Ascending aorta (tissue), 2 donors: ENCODE measurements at regions of chr4 and their contacts with region 1.

Region 1: GRCh38 chr4:102826890-102827673 is at the start of gene UBE2D3:
- DNase-seq: peak; percentile 67 to 96
- H3K4me3 ChIP-seq: peak within 1 kb of the TSS; percentile 83 to 88
- H3K27ac ChIP-seq: peak within 1 kb of the TSS; percentile 100
- H3K4me1 ChIP-seq: peaks cover 0 to 19% of the 10 kb centered on the region in 2 donors
- H3K27me3 ChIP-seq: no peaks in the 10 kb centered on the region
- CTCF ChIP-seq: no peak
- total RNA-seq, gene UBE2D3: 379 TPM

Region 2: DNA sequence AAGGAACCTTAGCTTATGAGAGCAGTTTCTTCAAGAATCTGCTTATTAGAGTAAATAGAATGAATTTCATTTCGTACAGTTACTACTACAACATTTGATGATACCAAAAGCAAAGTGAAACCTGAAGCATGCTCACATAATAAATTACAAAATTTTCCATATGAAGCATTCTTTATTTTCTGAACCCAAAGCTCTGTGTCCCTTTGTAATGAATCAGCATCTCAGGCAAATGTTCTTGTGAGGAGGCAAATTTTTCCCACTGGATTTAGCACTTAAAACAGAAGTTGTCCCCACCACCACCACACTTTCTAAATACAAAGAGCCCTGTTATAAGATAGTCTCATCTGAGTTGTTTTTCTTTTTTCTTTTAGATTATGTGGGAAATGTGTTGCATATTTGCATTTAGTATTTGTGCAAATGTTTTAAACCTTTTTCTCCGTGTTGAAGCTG is 396.6 kb before region 1 on chr4:
- intact Hi-C with region 1: loop called (anchors 2 kb)
- DNase-seq: no peak
- H3K4me3 ChIP-seq: peak overlapping the region; percentile 66 to 87
- H3K27ac ChIP-seq: peak overlapping the region; percentile 49 to 70
- H3K4me1 ChIP-seq: no peaks in the 10 kb centered on the region
- H3K27me3 ChIP-seq: no peaks in the 10 kb centered on the region
- CTCF ChIP-seq: no peak

Region 3: DNA sequence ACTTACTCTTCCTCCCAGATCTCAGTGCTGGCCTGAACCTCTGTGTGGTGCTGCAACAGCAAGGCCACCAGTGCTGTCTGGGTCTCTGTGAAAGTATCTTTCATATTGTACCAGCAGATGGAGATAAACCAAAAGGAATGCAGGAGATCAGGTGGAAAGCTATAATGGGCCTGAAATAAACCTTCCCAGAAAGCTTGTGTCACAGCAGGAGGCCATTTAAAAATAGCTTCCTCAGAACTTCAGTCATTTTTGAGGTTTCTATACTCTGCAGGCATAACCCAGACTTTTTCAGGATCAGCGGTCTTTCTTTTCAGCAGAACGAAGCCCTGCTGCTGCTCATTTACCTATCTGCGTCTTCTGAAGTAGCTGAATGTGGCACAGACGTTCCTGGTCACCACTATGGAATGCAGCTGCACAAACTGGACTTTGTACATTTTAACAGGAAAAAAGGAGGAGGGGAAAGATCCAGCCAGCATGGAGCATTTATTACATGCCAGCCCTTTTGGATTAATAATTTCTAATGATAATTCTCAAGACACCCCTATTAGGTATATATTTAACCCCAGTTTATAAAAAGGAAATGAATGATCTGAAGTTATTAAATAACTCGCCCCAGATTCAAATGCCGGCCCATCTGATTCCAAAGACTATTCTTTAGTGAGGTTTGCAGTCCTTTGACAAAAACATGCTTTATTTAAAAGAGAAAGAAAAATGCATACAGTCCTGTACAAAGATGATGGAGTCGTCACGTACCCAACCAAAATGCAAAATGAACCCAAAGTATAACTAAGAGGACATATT is 206.2 kb before region 1 on chr4:
- intact Hi-C with region 1: loop called (anchors 5 kb)
- DNase-seq: no peak
- H3K4me3 ChIP-seq: peak overlapping the region in 1 of 2 donors; percentile 38
- H3K27ac ChIP-seq: peak overlapping the region; percentile 52 to 62
- H3K4me1 ChIP-seq: no peaks in the 10 kb centered on the region
- H3K27me3 ChIP-seq: no peaks in the 10 kb centered on the region
- CTCF ChIP-seq: peak; percentile 40 to 55 (median 53)

Region 4: DNA sequence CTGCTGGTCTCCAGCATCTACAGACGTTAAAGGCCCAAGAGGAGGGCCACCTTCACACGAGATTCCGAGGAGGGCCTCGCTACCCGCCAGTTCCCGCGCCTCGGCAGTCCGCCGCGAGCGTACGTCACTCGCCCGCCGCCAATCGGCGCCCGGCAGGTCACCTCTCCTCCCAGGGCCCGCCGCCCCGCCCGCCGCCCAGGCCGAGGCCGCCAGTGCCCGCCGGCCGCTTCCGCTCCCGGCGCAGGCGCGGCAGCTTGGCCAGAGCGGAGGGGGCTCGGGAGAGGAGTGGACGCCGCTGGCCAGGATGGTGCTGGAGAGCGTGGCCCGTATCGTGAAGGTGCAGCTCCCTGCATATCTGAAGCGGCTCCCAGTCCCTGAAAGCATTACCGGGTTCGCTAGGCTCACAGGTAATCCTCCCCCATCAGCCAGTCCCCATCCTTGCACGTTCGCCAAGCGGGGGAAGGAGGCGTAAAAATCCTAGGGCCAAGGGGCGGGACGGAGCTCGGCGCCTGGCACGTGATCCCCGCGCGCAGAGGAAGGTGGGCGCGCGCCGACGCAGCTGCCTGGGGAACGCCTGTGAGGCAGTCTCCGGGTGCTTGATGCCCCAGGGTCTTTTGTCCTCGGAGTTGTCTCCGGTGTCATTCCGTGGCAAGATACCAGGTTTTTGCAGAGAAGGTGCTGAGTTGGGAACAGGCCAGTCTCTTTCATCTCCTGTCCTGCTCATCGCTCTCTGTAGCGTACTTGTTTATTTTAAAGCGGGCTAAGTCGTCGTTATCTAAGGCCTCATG is 41.9 kb after region 1 on chr4 and contains the start of gene CISD2:
- intact Hi-C with region 1: loop called (anchors 1 kb)
- DNase-seq: peak; percentile 71 to 95
- H3K4me3 ChIP-seq: peak within 1 kb of the TSS; percentile 76 to 86
- H3K27ac ChIP-seq: peak within 1 kb of the TSS; percentile 96 to 98
- H3K4me1 ChIP-seq: peaks cover 6 to 16% of the 10 kb centered on the region in 2 donors
- H3K27me3 ChIP-seq: no peaks in the 10 kb centered on the region
- CTCF ChIP-seq: peak in 1 of 3 experiments; percentile 2
- total RNA-seq, gene CISD2: 10.4 TPM

Region 5: GRCh38 chr4:102988429-102989020 is 161.4 kb after region 1 on chr4:
- intact Hi-C with region 1: no loop called
- DNase-seq: no peak
- H3K4me3 ChIP-seq: no peak overlapping the region
- H3K27ac ChIP-seq: no peak overlapping the region
- H3K4me1 ChIP-seq: no peaks in the 10 kb centered on the region
- H3K27me3 ChIP-seq: no peaks in the 10 kb centered on the region
- CTCF ChIP-seq: no peak

Region 6: DNA sequence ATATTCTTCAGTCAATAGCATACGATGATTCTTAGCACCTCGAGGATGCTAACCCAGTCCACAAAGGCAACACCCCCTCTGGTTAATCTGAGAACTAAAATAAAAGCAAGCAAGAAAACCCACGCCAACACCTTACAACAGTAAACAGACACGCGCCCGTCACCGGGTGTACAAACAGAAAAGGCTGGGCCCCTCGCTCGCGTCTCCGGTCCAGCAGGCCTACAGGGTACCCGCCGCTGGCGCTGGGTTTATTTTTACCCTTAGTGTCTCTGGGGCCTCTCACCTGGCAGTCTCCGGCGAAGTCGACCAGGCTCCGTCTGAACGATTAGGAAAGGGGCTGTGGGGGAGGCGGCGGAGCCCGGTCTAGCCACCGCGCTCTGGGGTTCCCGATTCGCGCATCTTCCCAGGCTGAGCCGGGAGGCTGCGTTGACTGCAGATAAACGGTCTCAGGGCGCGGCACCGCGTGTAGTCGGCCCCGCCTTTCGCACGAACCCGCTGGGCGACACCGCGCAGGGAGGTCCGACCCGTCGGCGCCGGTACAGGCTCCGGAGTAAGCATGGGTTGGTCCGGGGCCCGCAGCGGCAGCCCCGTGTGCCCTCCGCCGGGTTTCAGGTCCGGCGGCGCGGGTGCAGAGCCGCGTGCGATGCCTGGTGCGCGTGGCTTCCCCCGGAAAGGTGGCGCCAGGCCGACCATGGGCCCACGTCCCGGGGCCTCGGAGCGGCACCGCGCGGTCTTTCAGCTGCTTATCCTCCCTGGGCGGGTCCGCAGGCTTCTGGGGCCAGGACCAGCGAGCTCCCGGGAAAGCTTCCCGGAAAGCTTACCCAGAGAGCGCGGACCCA is 249.0 kb after region 1 on chr4:
- intact Hi-C with region 1: loop called (anchors 2 kb)
- DNase-seq: peak in 1 of 2 donors; percentile 78
- H3K4me3 ChIP-seq: peak overlapping the region; percentile 58 to 85
- H3K27ac ChIP-seq: peak overlapping the region; percentile 89 to 91
- H3K4me1 ChIP-seq: peaks cover 3 to 9% of the 10 kb centered on the region in 2 donors
- H3K27me3 ChIP-seq: no peaks in the 10 kb centered on the region
- CTCF ChIP-seq: peak in 1 of 3 experiments; percentile 17